PC-3 (cell line): ENCODE measurements at regions of chr2 and their contacts with region 1.

Region 1: GRCh38 chr2:233480490-233481202 is 85.9 kb downstream of the USP40 start:
- DNase-seq: peak; percentile 76
- ATAC-seq: peak; percentile 70
- H3K4me3 ChIP-seq: peak overlapping the region; percentile 23; the same call in 1 of the 2 replicates
- H3K27ac ChIP-seq: peak overlapping the region; percentile 77
- H3K4me1 ChIP-seq: peaks cover 45% of the 10 kb centered on the region
- H3K27me3 ChIP-seq: no peaks in the 10 kb centered on the region
- CTCF ChIP-seq: peak; percentile 57

Region 2: DNA sequence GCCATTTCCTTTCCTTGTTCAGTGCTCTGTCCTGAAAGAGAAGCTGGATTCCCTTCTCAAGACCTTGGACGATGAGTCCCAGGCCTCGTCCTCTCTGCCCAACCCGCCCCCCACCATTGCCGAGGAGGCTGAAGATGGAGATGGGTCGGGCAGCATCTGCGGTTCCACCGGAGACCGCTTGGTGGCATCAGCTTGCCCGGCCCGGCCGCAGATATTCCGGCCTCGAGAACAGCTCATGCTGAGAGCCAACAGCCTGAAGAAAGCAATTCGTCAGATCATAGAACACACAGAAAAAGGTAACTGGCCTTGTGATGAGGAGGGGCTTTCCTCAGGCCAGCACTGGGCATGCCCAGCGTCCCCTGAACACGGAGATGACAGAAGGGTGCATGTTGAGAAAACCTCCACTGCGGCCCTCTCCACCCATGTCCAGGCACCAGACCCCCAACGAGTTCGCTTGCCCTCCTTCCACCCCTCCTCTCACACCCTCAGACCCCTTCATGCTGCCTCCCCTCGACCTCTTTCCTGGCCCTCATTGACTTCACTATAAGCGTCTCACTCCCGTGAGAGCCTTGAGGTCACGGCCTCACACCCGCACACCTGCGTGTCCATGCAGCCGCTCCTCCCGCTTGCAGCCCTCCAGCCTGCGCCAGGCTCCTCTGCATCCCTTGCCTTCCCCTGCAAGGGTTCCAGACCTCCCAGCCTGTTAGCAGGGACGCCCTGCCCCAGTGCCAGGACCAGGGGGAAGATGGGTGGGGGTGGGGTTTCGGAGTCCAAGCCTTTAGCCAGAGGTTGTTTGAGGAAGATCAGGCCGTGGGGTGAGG is 31.4 kb before region 1 on chr2:
- CTCF ChIA-PET with region 1: no interaction called
- POLR2A ChIA-PET with region 1: no interaction called
- intact Hi-C with region 1: loop called (anchors 2 kb)
- DNase-seq: peak; percentile 53
- ATAC-seq: peak; percentile 83
- H3K4me3 ChIP-seq: no peak overlapping the region
- H3K27ac ChIP-seq: no peak overlapping the region
- H3K4me1 ChIP-seq: 0 out of 2 replicates have a peak, but pooled peaks cover 3% of the 10 kb centered on the region
- H3K27me3 ChIP-seq: no peaks in the 10 kb centered on the region
- CTCF ChIP-seq: peak; percentile 68

Region 3: GRCh38 chr2:233566141-233566960 is 85.7 kb after region 1 on chr2 and contains the start of gene USP40:
- CTCF ChIA-PET with region 1: no interaction called
- POLR2A ChIA-PET with region 1: interaction called, 12 read pairs
- intact Hi-C with region 1: loop called (anchors 1 kb)
- DNase-seq: peak; percentile 91
- ATAC-seq: peak; percentile 97
- H3K4me3 ChIP-seq: peak within 1 kb of the TSS; percentile 95
- H3K27ac ChIP-seq: peak within 1 kb of the TSS; percentile 83
- H3K4me1 ChIP-seq: peaks cover 13% of the 10 kb centered on the region
- H3K27me3 ChIP-seq: no peaks in the 10 kb centered on the region
- CTCF ChIP-seq: no peak
- total RNA-seq, gene USP40: 32.1 and 32.3 TPM in 2 replicates

Region 4: DNA sequence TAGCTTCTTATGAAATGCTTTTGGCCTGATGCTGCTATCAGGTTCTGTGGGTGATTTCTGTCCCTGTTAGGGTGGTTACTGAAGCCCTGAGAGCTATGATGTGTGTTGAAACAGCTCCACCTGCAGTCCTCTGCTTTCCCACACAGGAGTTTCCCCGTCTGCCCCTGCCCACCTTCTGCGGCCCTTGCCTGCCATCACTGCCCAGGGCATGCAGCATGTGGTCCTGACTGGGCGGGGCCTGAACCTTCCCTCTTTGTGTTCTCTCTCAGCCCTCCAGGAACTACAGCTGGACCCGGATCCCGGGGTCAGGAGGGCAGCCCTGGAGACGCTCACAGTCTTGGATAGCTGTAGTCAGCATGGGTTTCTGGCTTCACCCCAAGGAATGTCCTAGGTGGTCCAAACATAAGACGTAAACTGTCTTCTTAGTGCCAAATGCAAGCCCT is 352.2 kb after region 1 on chr2:
- CTCF ChIA-PET with region 1: interaction called, 15 read pairs
- POLR2A ChIA-PET with region 1: no interaction called
- intact Hi-C with region 1: loop called (anchors 2 kb)
- DNase-seq: peak; percentile 54
- ATAC-seq: peak; percentile 77
- H3K4me3 ChIP-seq: no peak overlapping the region
- H3K27ac ChIP-seq: no peak overlapping the region
- H3K4me1 ChIP-seq: no peaks in the 10 kb centered on the region
- H3K27me3 ChIP-seq: no peaks in the 10 kb centered on the region
- CTCF ChIP-seq: peak; percentile 60; the same call in 1 of the 2 replicates

Region 5: DNA sequence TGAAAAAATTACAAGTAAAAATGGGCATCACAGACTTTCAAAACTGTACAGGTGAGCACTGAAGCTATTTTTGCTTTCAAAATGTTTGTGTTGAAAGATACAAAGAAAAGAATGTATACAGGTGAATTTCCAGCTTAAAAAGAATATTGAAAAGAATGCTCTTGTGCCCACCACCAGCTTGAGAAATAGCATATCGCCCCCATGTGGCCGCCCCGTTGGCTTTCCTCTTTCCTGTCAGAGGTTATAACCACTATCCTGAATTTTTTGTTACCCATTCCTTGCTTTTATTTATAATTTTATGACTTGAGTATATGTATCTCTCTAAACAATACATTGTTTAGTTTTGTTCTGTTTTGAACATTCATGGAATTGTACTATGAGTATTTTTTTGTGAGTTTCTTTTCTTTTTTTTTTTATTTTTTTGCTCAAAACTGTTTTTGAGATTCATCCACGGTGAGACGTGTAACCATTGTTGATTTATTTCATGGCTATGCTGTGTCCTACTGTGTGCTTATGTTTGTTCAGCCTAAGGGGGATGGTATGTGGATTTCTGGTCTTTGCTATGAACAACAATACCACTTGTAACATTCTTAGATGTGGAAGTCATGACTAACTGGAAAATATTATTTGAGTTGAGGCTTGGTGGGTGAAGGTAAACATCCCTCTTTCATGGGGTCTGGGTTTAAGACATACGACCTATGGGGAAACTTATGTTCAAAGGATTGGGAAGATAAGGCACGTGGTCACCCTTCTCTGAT is 448.1 kb after region 1 on chr2:
- CTCF ChIA-PET with region 1: no interaction called
- POLR2A ChIA-PET with region 1: no interaction called
- intact Hi-C with region 1: loop called (anchors 10 kb)
- DNase-seq: peak; percentile 56
- ATAC-seq: no peak
- H3K4me3 ChIP-seq: no peak overlapping the region
- H3K27ac ChIP-seq: no peak overlapping the region
- H3K4me1 ChIP-seq: no peaks in the 10 kb centered on the region
- H3K27me3 ChIP-seq: no peaks in the 10 kb centered on the region
- CTCF ChIP-seq: peak; percentile 84

Region 6: GRCh38 chr2:234308813-234309195 is 828.2 kb after region 1 on chr2:
- CTCF ChIA-PET with region 1: no interaction called
- POLR2A ChIA-PET with region 1: no interaction called
- intact Hi-C with region 1: no loop called
- DNase-seq: peak; percentile 92
- ATAC-seq: peak; percentile 90
- H3K4me3 ChIP-seq: no peak overlapping the region
- H3K27ac ChIP-seq: peak overlapping the region; percentile 98
- H3K4me1 ChIP-seq: peaks cover 40% of the 10 kb centered on the region
- H3K27me3 ChIP-seq: no peaks in the 10 kb centered on the region
- CTCF ChIP-seq: no peak